Esophagus muscularis mucosa (tissue), 4 donors: ENCODE measurements at regions of chr15 and their contacts with region 1.

Region 1: DNA sequence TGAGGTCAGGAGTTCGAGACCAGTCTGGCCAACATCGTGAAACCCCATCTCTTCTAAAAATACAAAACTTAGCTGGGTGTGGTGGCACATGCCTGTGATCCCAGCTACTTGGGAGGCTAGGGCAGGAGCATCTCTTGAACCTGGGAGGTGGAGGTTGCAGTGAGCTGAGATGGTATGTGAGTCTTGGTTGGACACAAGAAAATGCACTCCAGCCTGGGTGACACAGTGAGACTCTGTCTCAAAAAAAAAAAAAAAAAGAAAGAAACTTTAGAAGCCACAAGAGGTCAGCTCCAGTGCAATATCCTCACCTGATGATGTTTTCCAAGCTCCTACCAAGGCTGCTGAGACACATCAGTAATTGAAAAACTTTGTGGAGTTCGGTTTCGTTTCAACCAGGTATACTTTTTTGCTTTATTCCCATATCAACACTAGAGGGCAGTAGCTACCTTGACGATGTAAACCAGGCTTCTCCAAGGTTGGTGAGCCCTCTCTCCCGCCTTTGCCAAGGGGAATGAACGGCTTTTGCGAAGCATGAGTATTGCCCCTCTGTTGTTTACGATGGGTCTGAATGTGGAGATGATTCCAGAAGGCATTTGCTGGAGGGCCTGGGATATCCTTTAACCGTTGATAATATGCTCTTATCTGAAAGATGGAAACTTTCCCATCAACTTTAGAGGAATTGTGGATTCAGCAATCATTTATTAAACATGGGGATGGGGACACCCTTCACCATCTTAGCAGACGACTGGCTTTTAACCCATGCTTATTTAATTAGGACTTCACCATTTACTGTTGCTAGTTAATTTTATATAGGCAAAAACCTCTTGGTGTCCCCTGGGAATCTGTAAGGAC is 202.8 kb downstream of the SV2B start:
- DNase-seq: no peak
- H3K4me3 ChIP-seq: no peak overlapping the region
- H3K27ac ChIP-seq: no peak overlapping the region
- H3K4me1 ChIP-seq: peaks cover 0 to 10% (median 6%) of the 10 kb centered on the region in 4 donors
- H3K27me3 ChIP-seq: peaks cover 0 to 44% (median 0%) of the 10 kb centered on the region in 4 donors
- CTCF ChIP-seq: peak; percentile 67 to 75 (median 73)
- EP300 ChIP-seq: no peak
- POLR2A ChIP-seq: no peak

Region 2: GRCh38 chr15:91496647-91497354 is 194.0 kb after region 1 on chr15:
- intact Hi-C with region 1: no loop called
- DNase-seq: no peak
- H3K4me3 ChIP-seq: no peak overlapping the region
- H3K27ac ChIP-seq: no peak overlapping the region
- H3K4me1 ChIP-seq: no peaks in the 10 kb centered on the region
- H3K27me3 ChIP-seq: no peaks in the 10 kb centered on the region
- CTCF ChIP-seq: no peak
- EP300 ChIP-seq: no peak
- POLR2A ChIP-seq: no peak

Region 3: GRCh38 chr15:91942676-91943576 is 640.1 kb after region 1 on chr15:
- intact Hi-C with region 1: loop called (anchors 10 kb)
- DNase-seq: peak; percentile 97
- H3K4me3 ChIP-seq: peak overlapping the region; percentile 11 to 33 (median 22)
- H3K27ac ChIP-seq: peak overlapping the region; percentile 58 to 62 (median 62)
- H3K4me1 ChIP-seq: peaks cover 70 to 77% (median 72%) of the 10 kb centered on the region in 4 donors
- H3K27me3 ChIP-seq: no peaks in the 10 kb centered on the region
- CTCF ChIP-seq: no peak
- EP300 ChIP-seq: no peak
- POLR2A ChIP-seq: no peak

Region 4: DNA sequence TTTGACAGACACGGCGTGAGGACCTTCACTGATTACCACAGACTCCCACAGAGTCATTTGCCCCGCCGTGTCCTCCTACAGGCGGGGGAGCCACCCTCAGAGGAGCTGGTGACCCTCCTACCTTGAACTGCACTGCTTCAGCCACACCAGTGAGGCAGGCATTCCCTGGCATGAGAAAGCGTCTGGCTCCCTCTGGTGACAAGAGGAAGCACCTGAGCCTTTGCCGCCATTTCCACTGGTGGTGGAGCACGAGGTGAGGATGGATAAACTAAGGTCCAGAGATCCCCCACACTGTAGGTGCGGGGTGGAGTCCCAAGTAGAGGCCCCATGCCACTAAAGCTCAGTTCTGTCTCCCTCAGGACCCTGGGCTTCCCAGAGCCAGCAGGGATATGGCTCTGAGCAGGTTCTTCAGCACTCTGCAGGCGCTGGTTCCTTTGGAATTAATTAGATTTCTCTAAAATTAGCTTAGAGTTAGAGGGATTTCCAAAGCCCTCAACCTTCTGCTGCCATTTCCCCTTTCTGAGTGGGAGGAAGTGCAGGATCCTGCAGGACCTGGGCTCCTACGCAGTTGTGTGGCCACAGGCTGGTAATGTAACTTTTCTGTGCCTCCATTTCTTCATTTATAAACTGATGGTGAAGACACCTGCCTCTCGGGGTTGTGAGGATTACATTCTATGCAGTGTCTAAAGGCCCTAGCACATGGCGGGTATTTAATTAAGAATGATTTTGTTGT is 774.7 kb after region 1 on chr15:
- intact Hi-C with region 1: loop called (anchors 2 kb)
- DNase-seq: no peak
- H3K4me3 ChIP-seq: no peak overlapping the region
- H3K27ac ChIP-seq: no peak overlapping the region
- H3K4me1 ChIP-seq: peaks cover 31 to 44% (median 40%) of the 10 kb centered on the region in 4 donors
- H3K27me3 ChIP-seq: no peaks in the 10 kb centered on the region
- CTCF ChIP-seq: peak; percentile 63 to 77 (median 63)
- EP300 ChIP-seq: no peak
- POLR2A ChIP-seq: no peak